CD4-positive, alpha-beta T cell (primary cell): ENCODE measurements at regions of chr5 and their contacts with region 1.

Region 1: GRCh38 chr5:84362061-84362720 is 22.5 kb downstream of the EDIL3 start:
- DNase-seq: no peak
- ATAC-seq: no peak
- H3K4me3 ChIP-seq: no peak overlapping the region
- H3K4me3 Mint-ChIP-seq: no peak overlapping the region
- H3K27ac ChIP-seq: no peak overlapping the region
- H3K27ac Mint-ChIP-seq: no peak overlapping the region
- H3K4me1 ChIP-seq: no peaks in the 10 kb centered on the region
- H3K4me1 Mint-ChIP-seq: no peaks in the 10 kb centered on the region
- H3K27me3 ChIP-seq: no peaks in the 10 kb centered on the region
- H3K27me3 Mint-ChIP-seq: no peaks in the 10 kb centered on the region
- CTCF ChIP-seq: no peak

Region 2: DNA sequence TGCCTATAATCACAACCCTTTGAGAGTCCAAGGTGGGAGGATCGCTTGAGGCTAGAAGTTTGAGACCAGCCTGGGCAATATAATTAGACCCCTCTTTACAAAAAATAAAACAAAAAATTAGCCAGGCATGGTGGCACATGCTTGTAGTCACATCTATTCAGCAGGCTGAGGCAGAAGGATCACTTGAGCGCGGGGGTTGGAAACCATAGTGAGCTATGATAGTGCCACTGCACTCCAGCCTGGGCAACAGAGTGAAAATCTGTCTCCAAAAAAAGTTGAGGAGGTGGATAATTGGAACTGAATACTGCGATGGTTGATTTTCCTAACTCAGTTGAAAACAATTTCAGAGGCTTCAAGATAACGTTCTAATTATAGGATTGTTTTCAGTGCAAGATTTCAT is 30.1 kb before region 1 on chr5:
- CTCF ChIA-PET with region 1: no interaction called
- POLR2A ChIA-PET with region 1: no interaction called
- intact Hi-C with region 1: no loop called
- DNase-seq: no peak
- ATAC-seq: no peak
- H3K4me3 ChIP-seq: no peak overlapping the region
- H3K4me3 Mint-ChIP-seq: no peak overlapping the region
- H3K27ac ChIP-seq: no peak overlapping the region
- H3K27ac Mint-ChIP-seq: no peak overlapping the region
- H3K4me1 ChIP-seq: no peaks in the 10 kb centered on the region
- H3K4me1 Mint-ChIP-seq: no peaks in the 10 kb centered on the region
- H3K27me3 ChIP-seq: no peaks in the 10 kb centered on the region
- H3K27me3 Mint-ChIP-seq: no peaks in the 10 kb centered on the region
- CTCF ChIP-seq: no peak

Region 3: DNA sequence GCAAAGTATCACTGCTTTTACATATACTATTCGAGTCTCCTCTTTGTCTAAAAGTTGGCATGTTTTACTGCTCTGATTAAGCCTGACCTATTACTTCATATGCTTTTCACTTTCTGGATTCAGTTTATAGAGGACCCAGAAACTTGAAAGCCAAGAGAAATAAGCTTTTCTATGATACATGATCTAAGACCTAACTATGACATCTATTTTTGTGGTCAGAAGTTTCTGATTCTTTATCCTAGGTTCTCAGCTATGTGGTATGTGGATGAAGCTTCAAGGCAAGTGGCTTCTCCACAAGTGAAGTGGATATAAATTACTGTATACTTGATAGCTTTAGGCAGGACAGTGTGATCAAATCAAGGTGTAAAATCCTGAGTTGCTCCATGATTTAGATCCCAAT is 16.2 kb after region 1 on chr5:
- CTCF ChIA-PET with region 1: no interaction called
- POLR2A ChIA-PET with region 1: no interaction called
- intact Hi-C with region 1: loop called in 1 of 2 experiments (anchors 1 kb)
- DNase-seq: no peak
- ATAC-seq: no peak
- H3K4me3 ChIP-seq: no peak overlapping the region
- H3K4me3 Mint-ChIP-seq: no peak overlapping the region
- H3K27ac ChIP-seq: no peak overlapping the region
- H3K27ac Mint-ChIP-seq: no peak overlapping the region
- H3K4me1 ChIP-seq: no peaks in the 10 kb centered on the region
- H3K4me1 Mint-ChIP-seq: no peaks in the 10 kb centered on the region
- H3K27me3 ChIP-seq: peaks cover 14 to 17% of the 10 kb centered on the region in 2 experiments
- H3K27me3 Mint-ChIP-seq: peaks cover 21% of the 10 kb centered on the region
- CTCF ChIP-seq: no peak